ENCODE measurements at regions of chr7 and their contacts with region 1.

Region 1: DNA sequence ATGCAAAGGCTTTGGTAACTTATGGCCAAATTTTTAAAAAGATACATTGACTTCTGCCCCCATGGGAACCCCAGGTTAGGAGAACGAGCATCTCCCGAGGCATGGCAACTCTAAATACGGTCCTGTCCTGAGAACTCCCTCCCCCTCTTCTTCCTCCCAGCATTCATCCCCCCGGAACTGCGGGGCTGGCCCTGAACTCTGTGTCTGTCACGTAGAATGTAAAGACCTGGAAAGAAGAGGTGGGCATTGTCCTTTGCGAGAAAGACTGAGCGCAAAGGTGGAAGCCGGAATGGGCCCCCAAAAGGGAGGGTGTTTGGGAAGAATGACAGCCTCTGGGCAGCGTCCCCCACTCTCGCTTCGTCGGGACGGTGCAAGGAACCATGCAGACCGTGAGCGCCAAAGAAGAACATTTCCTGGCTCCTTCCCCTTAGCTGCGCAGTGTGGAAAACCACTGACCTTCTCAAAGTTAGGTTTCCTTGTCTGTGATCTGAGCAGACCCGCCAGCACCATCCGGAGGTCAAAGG is 21.0 kb downstream of the SHH start:
- DNase-seq: no peak
- H3K4me3 ChIP-seq: no peak overlapping the region
- H3K27ac ChIP-seq: no peak overlapping the region
- H3K4me1 ChIP-seq: no peaks in the 10 kb centered on the region
- H3K27me3 ChIP-seq: peaks cover 0 to 5% of the 10 kb centered on the region in 2 donors
- CTCF ChIP-seq: no peak
- POLR2A ChIP-seq: no peak

Region 2: DNA sequence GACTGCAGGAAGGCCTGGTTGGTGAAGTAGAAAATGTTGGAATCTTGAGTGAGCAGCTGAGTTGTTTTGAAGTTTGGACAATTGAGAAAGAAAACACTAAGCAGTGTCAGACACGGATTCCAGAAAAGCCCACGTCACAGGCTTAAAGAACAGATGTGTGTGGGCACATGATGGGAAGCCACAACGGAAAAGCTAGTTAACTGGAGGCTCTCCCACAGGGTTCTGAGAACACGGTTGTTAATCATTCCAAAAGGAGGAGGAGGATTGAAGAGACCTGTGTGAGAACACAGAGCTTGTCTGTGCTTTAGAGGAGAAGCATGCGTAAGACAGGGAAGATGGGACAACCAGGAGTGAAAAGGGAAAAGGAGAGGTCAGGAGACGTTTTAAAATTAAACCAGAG is 21.6 kb before region 1 on chr7:
- intact Hi-C with region 1: no loop called
- DNase-seq: no peak
- H3K4me3 ChIP-seq: no peak overlapping the region
- H3K27ac ChIP-seq: peak overlapping the region; percentile 60 to 86
- H3K4me1 ChIP-seq: no peaks in the 10 kb centered on the region
- H3K27me3 ChIP-seq: no peaks in the 10 kb centered on the region
- CTCF ChIP-seq: no peak
- POLR2A ChIP-seq: no peak

Region 3: GRCh38 chr7:156827587-156828203 is 1036.4 kb after region 1 on chr7:
- intact Hi-C with region 1: loop called (anchors 5 kb)
- DNase-seq: no peak
- H3K4me3 ChIP-seq: no peak overlapping the region
- H3K27ac ChIP-seq: no peak overlapping the region
- H3K4me1 ChIP-seq: no peaks in the 10 kb centered on the region
- H3K27me3 ChIP-seq: no peaks in the 10 kb centered on the region
- CTCF ChIP-seq: peak in 2 of 3 donors; percentile 22 to 27
- POLR2A ChIP-seq: no peak